Psoas muscle (tissue), 8 donors: ENCODE measurements at regions of chr2 and their contacts with region 1.

Region 1: DNA sequence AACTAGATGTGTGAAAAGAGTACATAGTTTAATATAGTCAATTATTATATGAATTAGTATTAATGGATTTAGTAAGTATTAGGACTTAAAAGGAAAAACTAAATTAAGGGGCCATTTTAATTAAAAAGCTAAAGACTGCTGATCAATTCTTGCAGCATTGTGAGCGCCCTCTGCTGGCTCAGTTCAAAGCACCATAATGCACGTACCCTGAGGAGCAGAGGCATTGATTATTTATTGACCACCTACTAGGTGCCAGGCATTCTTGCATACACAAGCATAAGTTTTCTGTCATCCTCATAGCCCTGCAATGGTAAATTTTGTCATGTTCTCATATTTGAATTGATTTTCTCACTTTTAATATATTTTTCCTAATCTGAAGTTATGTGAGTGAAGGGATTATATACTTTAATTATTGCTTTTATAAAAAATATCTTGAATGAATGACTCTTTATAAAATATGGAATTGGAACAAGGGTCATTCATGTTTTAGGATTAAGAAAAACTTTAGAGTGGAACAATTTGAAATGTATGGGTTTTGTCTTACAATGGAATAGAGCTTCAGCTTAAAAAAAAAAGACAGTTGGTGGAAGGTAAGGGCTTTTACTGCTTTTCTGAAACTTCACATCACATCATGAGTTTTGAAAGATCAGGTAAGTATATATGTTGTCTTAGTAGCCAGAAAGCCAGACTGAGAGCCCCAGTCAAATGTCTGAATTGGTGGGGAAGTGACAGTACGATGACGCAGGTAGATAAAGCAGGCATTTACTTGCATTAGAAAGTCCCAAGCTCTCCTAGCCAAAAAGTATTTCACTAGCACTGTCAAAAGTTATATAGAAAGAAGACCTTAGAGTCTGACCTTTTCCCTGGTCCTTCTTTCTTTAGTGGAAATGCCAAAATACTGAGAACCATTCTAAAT is 9.7 kb downstream of the ITGA4 start:
- DNase-seq: peak; percentile 61 to 66
- ATAC-seq: no peak
- H3K4me3 ChIP-seq: no peak overlapping the region
- H3K27ac ChIP-seq: no peak overlapping the region
- H3K4me1 ChIP-seq: no peaks in the 10 kb centered on the region
- H3K27me3 ChIP-seq: peaks cover 0 to 6% (median 0%) of the 10 kb centered on the region in 3 donors
- CTCF ChIP-seq: peak; percentile 74

Region 2: DNA sequence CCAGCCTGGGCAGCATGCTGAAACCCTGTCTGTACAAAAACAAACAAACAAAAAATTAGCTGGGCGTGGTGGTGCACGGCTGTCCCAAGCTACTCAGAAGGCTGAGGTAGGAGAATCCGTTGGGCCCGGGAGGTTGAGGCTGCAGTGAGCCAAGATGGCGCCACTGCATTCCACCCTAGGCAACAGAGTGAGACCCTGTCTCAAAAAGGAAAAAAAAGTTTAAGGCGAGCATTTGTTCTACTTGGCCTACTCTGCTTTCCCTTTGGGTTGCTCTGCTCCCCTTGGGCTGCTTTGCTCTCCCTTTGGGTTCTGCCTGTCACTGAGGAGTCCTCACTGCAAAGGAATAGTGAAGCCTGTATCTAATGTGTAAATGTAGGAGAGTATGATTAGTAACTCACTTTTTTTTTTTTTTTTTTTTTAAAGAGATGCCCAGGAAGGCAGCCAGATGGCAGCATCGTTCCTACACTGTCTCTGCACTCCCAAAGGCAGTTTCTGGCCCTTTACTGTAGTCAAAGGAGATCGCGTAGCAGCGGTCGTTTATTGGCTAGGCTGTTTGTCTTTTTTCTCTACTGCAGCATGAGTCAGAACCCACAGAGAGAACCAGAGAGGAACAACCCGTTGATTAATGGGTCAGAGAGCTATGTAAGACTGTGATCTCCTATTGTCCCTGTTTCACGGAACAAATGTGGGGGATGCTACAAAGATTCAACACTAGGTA is 1341.5 kb before region 1 on chr2:
- intact Hi-C with region 1: loop called (anchors 5 kb)
- DNase-seq: peak; percentile 36 to 67
- ATAC-seq: peak; percentile 87 to 96 (median 90)
- H3K4me3 ChIP-seq: no peak overlapping the region
- H3K27ac ChIP-seq: no peak overlapping the region
- H3K4me1 ChIP-seq: no peaks in the 10 kb centered on the region
- H3K27me3 ChIP-seq: no peaks in the 10 kb centered on the region
- CTCF ChIP-seq: peak; percentile 52

Region 3: DNA sequence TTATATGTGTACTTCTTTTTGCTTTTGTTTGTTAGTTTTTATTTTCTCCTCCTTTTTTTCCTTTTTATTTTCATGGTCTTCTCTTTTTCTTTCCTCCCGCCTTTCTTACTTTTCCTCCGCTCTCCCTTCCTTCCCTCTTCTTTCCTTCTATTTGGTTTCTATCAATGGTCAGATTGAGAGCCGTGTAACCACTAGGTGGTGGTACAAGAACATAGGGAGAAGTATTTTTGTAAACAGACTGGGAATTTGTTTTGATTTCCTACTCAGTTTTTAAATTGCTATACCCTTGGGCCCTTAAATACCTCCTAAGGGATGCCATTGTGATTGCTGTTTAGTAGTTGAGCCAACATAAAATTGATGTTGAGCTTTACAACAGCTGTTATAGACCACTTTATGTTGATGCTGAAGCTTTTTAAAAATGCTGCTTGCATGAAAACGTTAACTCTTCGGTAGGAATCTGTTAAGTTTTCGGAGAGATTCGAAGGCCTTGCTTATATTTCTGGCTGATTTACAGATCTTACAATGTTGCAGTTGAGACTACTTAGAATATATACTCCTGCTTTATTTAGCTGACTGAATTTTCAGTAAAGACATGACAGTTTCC is 362.3 kb before region 1 on chr2:
- intact Hi-C with region 1: loop called in 1 of 2 experiments (anchors 5 kb)
- DNase-seq: no peak
- ATAC-seq: no peak
- H3K4me3 ChIP-seq: no peak overlapping the region
- H3K27ac ChIP-seq: no peak overlapping the region
- H3K4me1 ChIP-seq: no peaks in the 10 kb centered on the region
- H3K27me3 ChIP-seq: no peaks in the 10 kb centered on the region
- CTCF ChIP-seq: peak; percentile 60